IMR-90 (cell line): ENCODE measurements at regions of chr9 and their contacts with region 1.

Region 1: DNA sequence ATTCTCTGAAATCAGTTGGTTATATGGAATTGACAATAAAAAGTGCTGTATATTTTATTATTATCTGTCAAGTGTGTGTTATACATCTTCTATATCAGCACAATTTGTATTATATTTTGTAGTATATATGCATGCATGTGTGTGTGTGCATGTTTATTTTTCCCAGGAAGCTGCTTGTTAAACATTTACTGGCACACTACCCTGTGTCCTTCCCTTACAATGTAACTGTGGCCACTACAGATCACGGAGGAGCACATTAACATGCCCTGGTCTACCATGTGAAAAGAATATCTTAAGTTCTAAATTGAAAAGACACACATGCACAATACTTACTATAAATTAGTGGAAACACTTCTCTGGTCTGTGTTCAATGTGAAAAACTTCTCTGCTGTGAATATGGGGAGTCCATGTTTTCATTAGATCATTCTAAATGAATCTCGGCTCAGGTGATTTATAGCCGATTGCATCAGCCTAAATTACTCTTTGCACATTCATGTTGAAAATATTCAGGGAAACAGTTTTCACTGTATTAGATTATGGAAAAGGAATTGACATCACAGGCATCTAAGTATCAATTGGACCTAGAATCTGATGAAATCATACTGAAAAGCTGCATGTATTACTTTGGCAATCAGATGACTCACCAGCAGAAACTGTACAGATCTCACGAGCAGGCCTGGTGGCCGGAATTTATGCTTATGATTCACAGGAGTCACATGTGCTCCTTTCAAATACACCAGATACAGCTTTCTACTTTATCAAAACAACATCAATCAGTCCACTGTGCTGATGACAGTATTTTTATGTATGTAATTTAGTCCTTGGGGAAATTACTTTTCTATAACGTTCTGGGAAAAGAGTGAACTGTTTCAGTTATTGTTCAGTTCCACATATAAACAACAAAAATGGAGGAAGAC is 39.4 kb downstream of the LURAP1L start:
- DNase-seq: peak; percentile 100
- ATAC-seq: peak; percentile 79
- H3K4me3 ChIP-seq: peak overlapping the region; percentile 19; the same call in 1 of the 2 replicates
- H3K27ac ChIP-seq: peak overlapping the region; percentile 97
- H3K4me1 ChIP-seq: peaks cover 20% of the 10 kb centered on the region
- H3K27me3 ChIP-seq: no peaks in the 10 kb centered on the region
- CTCF ChIP-seq: peak; percentile 50
- POLR2A ChIP-seq: peak; percentile 52; the same call in 1 of the 2 replicates
- RAD21 ChIP-seq: no peak

Region 2: DNA sequence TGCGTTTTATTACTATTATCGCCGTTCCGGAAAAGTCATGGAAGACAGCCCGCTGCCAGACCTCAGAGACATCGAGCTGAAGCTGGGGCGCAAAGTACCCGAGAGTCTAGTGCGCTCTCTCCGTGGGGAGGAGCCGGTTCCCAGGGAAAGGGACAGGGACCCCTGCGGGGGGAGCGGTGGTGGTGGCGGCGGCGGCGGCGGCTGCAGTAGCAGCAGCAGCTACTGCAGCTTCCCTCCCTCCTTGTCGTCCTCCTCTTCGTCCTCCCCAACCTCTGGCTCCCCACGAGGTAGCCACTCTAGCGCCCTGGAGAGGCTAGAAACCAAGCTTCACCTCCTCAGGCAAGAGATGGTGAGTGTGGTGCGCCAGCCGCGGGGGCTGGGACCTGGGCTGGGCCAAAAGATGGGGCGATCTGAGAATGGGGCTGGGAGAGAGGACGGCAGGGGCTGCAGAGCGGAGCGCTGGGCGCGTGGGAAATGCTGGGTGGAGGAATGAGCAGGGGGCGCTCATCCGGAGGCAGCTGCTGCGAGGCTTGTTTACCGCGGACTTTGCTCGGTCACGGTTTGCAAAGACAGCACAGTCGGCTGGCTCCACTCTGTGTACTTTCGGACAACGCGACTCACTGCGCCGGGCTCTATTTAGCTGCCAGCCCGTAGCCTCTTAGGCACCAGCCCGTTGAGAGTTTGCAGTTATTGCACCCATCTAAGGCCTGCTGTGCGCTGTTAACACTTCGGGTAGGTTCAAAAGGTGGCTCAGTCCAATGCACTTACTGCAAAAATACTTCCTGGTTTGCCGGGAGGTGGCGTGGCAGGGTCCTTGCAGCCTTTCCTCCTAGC is 38.3 kb before region 1 on chr9:
- CTCF ChIA-PET with region 1: interaction called, 8 read pairs
- POLR2A ChIA-PET with region 1: interaction called, 13 read pairs
- dilution Hi-C with region 1: no loop called
- in situ Hi-C with region 1: no loop called
- intact Hi-C with region 1: loop called (anchors 1 kb)
- DNase-seq: peak; percentile 89
- ATAC-seq: peak; percentile 84
- H3K4me3 ChIP-seq: peak overlapping the region; percentile 91
- H3K27ac ChIP-seq: peak overlapping the region; percentile 96
- H3K4me1 ChIP-seq: peaks cover 5% of the 10 kb centered on the region
- H3K27me3 ChIP-seq: no peaks in the 10 kb centered on the region
- CTCF ChIP-seq: peak; percentile 53
- POLR2A ChIP-seq: peak; percentile 45; the same call in 1 of the 2 replicates
- RAD21 ChIP-seq: peak; percentile 64; the same call in 1 of the 2 replicates

Region 3: GRCh38 chr9:12794101-12794799 is 20.0 kb before region 1 on chr9:
- CTCF ChIA-PET with region 1: interaction called, 3 read pairs
- POLR2A ChIA-PET with region 1: interaction called, 3 read pairs
- dilution Hi-C with region 1: no loop called
- in situ Hi-C with region 1: no loop called
- intact Hi-C with region 1: loop called (anchors 1 kb)
- DNase-seq: peak; percentile 61
- ATAC-seq: peak; percentile 65
- H3K4me3 ChIP-seq: no peak overlapping the region
- H3K27ac ChIP-seq: peak overlapping the region; percentile 84; the same call in 1 of the 2 replicates
- H3K4me1 ChIP-seq: 0 out of 2 replicates have a peak, but pooled peaks cover 6% of the 10 kb centered on the region
- H3K27me3 ChIP-seq: no peaks in the 10 kb centered on the region
- CTCF ChIP-seq: no peak
- POLR2A ChIP-seq: no peak
- RAD21 ChIP-seq: no peak